Kidney (tissue), 22 donors: ENCODE measurements at regions of chr14 and their contacts with region 1.

Region 1: DNA sequence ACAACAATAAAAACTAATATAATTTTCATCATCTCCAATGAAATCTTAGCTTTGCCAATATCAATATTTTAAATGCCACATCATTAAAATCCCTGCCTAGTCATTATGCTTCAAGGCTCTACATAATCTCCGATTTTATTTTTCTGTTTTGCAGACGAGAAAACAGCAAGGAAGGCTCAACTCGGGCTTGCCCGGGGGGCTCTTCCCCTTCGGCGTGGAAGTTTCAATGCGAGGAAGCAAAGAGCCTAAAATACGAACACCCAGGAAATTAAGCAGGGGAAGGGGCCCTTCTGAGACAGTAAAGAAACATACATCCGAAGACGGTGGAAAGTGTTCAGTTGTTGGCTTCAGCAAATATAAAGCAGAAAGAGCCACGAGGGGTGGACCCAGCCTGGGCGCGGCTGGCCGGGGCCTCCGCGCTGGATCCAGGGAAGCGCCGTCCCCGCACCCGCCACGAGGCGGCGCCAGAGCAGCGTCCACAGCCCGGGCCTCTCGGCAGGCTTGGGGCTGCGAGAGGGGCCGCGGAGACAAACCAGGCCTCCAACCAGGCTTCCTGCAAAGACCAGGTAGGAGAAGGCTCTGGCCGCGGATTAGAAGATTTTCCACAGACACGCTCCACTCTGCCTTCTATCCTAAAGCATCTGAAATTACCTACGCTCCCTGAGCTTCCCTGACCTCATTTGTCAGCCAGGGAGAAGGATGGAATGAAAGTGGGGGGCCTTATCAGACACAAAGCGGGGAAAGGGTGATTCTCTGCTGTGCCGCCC is 77.2 kb downstream of the SERPINA3 start:
- DNase-seq: peak; percentile 81 to 86 (median 84)
- H3K4me3 ChIP-seq: no peak overlapping the region
- H3K27ac ChIP-seq: no peak overlapping the region
- H3K4me1 ChIP-seq: peaks cover 0 to 2% (median 0%) of the 10 kb centered on the region in 3 donors
- H3K27me3 ChIP-seq: no peaks in the 10 kb centered on the region
- CTCF ChIP-seq: peak; percentile 76

Region 2: GRCh38 chr14:94439453-94440057 is 249.8 kb before region 1 on chr14:
- intact Hi-C with region 1: no loop called
- DNase-seq: no peak
- H3K4me3 ChIP-seq: no peak overlapping the region
- H3K27ac ChIP-seq: no peak overlapping the region
- H3K4me1 ChIP-seq: no peaks in the 10 kb centered on the region
- H3K27me3 ChIP-seq: no peaks in the 10 kb centered on the region
- CTCF ChIP-seq: no peak

Region 3: DNA sequence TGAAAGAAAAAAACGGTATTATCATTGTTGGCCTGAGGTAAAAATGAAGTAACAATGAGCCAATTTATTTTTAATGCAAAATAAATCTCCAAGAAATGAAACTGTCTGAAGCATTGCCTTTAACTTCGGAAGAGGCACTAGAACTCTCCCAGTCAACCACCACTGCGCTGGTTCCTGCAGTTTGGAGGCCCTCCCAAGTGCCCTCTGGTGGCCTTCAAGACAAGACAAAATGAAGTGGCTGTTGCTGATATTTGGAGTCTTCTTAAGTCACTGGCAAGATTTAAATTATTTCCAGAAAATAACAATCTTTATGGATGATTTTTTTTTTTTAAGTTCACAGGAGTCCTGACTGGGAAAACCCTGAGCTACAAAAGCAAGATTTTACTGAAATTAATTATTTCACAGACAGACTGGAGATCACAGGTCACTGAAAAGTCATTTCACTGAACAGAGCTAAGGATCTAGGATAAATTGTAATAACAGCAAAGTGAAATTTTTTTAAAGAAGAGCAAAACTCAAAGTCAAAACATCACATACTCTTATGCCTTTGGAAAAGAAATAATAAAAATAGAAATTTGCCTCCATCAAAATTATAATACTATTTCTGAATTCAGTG is 409.7 kb after region 1 on chr14:
- intact Hi-C with region 1: loop called (anchors 10 kb)
- DNase-seq: peak in 4 of 5 donors; percentile 62 to 86 (median 78)
- H3K4me3 ChIP-seq: no peak overlapping the region
- H3K27ac ChIP-seq: no peak overlapping the region
- H3K4me1 ChIP-seq: peaks cover 0 to 6% (median 0%) of the 10 kb centered on the region in 3 donors
- H3K27me3 ChIP-seq: no peaks in the 10 kb centered on the region
- CTCF ChIP-seq: peak; percentile 58

Region 4: DNA sequence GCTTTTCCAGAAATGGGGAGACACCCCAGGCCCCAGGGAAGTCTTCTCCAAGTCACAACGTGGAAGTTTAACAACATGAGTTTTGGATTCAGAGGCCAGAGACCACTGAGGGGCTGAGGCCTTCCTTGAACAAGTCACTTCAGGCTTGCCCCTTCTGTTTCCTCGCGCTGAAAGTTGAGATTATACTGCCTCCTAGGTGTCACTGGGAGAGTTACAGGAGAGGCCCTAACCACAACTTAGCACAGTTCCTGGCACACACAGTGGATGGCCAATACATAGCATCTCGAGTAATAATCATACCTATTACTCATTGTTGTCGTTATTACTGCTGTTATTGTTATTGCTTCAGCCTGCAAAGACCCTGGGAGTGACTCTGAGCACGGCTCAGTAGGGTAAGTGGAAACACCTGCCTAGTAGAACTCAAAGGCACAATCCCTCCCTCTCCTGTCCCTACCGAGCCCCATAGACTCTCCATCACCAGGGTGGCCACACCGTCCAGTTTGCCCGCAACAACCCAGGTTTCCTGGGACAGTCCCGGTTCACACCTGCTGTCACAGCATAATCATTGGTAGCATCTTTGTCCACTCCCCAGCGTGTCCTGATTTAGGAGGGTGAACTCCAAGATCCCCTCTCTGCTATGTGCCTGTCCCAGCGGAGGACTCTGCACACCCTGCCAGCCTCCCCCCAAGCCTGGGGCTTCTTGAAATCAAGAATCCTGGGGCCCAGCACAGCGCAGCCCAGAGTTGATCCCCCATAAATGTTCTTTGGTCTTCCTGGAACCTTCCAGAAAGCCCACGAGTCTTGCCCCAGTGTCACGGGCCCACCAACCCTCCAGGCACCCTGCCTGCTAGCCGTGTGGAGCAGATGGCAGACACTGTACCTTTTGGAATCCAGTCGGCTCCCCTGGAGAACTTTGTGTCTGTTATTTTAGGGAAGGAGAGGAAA is 742.1 kb after region 1 on chr14:
- intact Hi-C with region 1: loop called (anchors 10 kb)
- DNase-seq: peak in 4 of 5 donors; percentile 46 to 75 (median 62)
- H3K4me3 ChIP-seq: no peak overlapping the region
- H3K27ac ChIP-seq: peak overlapping the region in 1 of 2 donors; percentile 38
- H3K4me1 ChIP-seq: peaks cover 0 to 21% (median 11%) of the 10 kb centered on the region in 3 donors
- H3K27me3 ChIP-seq: no peaks in the 10 kb centered on the region
- CTCF ChIP-seq: peak; percentile 50